Adrenal gland (tissue), 19 donors: ENCODE measurements at regions of chr5 and their contacts with region 1.

Region 1: GRCh38 chr5:178279725-178280438 is 47.3 kb upstream of the PHYKPL start:
- DNase-seq: peak; percentile 81 to 94 (median 91)
- H3K4me3 ChIP-seq: no peak overlapping the region
- H3K27ac ChIP-seq: no peak overlapping the region
- H3K4me1 ChIP-seq: peaks cover 0 to 2% of the 10 kb centered on the region in 2 donors
- H3K27me3 ChIP-seq: no peaks in the 10 kb centered on the region
- CTCF ChIP-seq: peak; percentile 81 to 94 (median 88)
- POLR2A ChIP-seq: no peak

Region 2: GRCh38 chr5:178551059-178551458 is 271.2 kb after region 1 on chr5:
- intact Hi-C with region 1: loop called (anchors 5 kb)
- DNase-seq: no peak
- H3K4me3 ChIP-seq: no peak overlapping the region
- H3K27ac ChIP-seq: no peak overlapping the region
- H3K4me1 ChIP-seq: no peaks in the 10 kb centered on the region
- H3K27me3 ChIP-seq: no peaks in the 10 kb centered on the region
- CTCF ChIP-seq: peak in 5 of 6 experiments; percentile 21 to 50 (median 40)
- POLR2A ChIP-seq: no peak

Region 3: GRCh38 chr5:178838695-178839685 is 559.1 kb after region 1 on chr5:
- intact Hi-C with region 1: loop called in 1 of 2 experiments (anchors 10 kb)
- DNase-seq: peak; percentile 22 to 77 (median 46)
- H3K4me3 ChIP-seq: no peak overlapping the region
- H3K27ac ChIP-seq: no peak overlapping the region
- H3K4me1 ChIP-seq: no peaks in the 10 kb centered on the region
- H3K27me3 ChIP-seq: no peaks in the 10 kb centered on the region
- CTCF ChIP-seq: peak; percentile 19 to 58 (median 44)
- POLR2A ChIP-seq: no peak